A673 (cell line): ENCODE measurements at regions of chr15 and their contacts with region 1.

Region 1: GRCh38 chr15:42474827-42475226 is 16.1 kb downstream of the ZNF106 start:
- DNase-seq: peak; percentile 17
- H3K4me3 ChIP-seq: no peak overlapping the region
- H3K27ac ChIP-seq: no peak overlapping the region
- H3K4me1 ChIP-seq: peaks cover 6% of the 10 kb centered on the region
- H3K27me3 ChIP-seq: no peaks in the 10 kb centered on the region
- CTCF ChIP-seq: no peak

Region 2: GRCh38 chr15:41972253-41973242 is 502.3 kb before region 1 on chr15 and contains the start of gene EHD4:
- CTCF ChIA-PET with region 1: no interaction called
- POLR2A ChIA-PET with region 1: no interaction called
- intact Hi-C with region 1: loop called (anchors 10 kb)
- DNase-seq: peak; percentile 99
- H3K4me3 ChIP-seq: peak within 1 kb of the TSS; percentile 77
- H3K27ac ChIP-seq: peak within 1 kb of the TSS; percentile 79
- H3K4me1 ChIP-seq: peaks cover 37% of the 10 kb centered on the region
- H3K27me3 ChIP-seq: no peaks in the 10 kb centered on the region
- CTCF ChIP-seq: no peak
- total RNA-seq, gene EHD4: 27.3 and 29.4 TPM in 2 replicates

Region 3: GRCh38 chr15:42066764-42067415 is 407.9 kb before region 1 on chr15:
- CTCF ChIA-PET with region 1: no interaction called
- POLR2A ChIA-PET with region 1: no interaction called
- intact Hi-C with region 1: loop called (anchors 2 kb)
- DNase-seq: no peak
- H3K4me3 ChIP-seq: no peak overlapping the region
- H3K27ac ChIP-seq: no peak overlapping the region
- H3K4me1 ChIP-seq: no peaks in the 10 kb centered on the region
- H3K27me3 ChIP-seq: no peaks in the 10 kb centered on the region
- CTCF ChIP-seq: no peak

Region 4: DNA sequence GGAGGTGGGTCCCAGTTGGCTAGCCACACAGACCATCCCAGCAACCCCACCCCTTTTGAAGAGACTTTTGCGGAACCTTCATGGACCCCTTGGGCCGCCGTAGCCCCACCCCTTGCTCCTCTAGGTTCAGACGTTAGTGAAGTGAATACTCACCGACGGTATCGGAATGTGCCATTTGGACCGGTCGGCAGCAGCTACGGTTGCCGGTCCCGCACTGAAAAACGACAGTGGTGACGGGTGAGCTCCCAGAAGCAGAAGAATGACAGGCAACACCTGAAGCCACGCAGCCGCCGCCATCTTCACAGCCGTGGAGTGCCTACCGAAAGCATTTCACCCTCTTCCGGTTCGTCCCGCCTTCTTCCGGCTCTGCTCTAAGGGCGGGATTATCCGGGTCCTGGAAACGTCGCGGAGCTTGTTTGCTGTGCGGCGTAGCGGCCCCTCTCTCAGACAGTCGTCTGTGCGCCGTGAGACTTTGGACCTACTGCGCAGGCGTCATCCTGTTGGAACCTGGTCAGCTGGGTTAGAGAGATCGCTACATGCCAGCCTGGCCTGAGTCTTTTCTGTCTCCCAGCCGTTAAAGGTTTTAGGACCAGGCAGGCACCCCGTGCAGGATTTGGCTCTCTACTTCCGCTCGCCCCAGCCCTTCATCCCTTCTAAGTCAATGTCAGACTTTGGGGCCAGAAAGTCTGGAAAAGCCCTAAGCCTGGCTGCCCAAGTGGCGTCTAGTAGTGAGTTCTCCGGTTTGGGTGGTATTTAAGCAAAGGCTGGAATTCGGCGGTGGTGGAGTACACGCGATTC is 201.5 kb before region 1 on chr15 and contains the starts of genes GANC and TMEM87A:
- CTCF ChIA-PET with region 1: no interaction called
- POLR2A ChIA-PET with region 1: no interaction called
- intact Hi-C with region 1: loop called (anchors 10 kb)
- DNase-seq: peak; percentile 99
- H3K4me3 ChIP-seq: peak within 1 kb of the TSS; percentile 81
- H3K27ac ChIP-seq: peak within 1 kb of the TSS; percentile 96
- H3K4me1 ChIP-seq: peaks cover 23% of the 10 kb centered on the region
- H3K27me3 ChIP-seq: no peaks in the 10 kb centered on the region
- CTCF ChIP-seq: no peak
- total RNA-seq, gene GANC: 23.7 and 28.2 TPM in 2 replicates
- total RNA-seq, gene TMEM87A: 46.0 and 53.4 TPM in 2 replicates